Head of caudate nucleus (tissue), 42 donors: ENCODE measurements at regions of chr5 and their contacts with region 1.

Region 1: DNA sequence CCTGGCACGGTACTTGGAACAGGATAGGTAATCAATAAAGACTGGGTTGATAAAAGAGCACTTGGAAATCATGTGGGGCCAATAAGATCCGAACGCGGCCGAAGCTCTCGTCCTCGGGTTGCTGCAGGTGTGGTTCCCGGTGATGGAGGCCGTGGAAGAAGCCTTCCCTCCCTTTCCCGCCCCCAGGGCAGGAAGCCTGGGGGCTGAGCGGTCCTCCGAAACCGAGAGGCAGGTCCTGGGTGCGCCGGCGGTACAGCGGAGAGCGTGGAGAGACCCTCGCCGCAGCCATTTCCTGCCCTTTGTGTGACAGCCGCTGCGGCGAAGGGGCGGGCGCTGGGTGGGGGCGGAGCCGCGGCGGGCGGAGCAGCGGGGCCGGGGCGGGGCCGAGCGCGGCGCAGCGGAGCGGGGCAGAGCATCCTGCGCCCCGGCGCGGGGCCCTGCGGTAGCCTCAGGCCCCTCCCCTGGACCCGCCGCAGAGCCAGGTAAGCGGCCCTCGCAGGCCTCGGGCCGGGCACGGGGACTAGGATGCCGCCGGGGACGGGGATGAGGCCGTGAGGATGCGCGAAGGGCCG is at the start of gene CYFIP2:
- DNase-seq: peak in 40 of 42 donors; percentile 53 to 89 (median 76)

Region 2: DNA sequence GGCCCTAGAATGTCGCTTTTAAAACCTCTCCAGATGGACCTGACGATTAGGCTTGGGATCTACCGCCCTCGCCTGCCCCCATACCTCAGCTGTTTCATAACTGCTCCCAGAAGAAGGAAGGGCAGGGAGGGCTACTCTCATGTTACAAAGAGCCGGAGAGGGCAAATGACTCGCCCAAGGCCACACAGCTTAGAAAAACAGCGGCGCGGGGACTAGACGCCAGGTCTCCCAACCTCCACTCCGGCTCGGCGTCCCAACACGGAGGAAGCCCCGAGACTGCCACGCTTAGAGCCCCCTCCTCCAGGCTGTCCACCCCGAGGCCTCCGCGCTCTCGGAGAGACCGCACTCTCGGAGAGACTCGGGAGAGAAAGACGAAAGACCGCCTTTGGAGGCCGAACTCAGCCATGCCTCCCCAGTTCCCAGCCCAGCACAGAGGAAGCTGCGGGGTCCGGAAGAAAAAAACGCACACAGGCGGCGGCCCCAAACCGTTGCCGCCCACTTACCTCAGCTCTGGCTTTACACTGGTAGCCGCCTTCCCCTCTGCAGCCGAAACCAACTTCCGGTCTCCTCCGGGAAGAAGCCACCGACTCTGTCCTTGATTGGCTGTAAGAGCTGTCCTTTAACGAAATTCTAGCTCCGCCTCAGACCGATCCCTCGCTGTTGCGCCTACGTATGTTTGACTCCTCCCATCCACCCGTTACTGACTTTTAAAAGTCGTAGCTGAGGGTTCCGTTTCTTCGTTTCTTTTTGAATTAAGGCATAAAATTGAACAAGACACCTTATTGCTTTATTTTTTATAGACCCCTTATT is 123.3 kb before region 1 on chr5 and contains the start of gene MED7:
- intact Hi-C with region 1: loop called (anchors 10 kb)
- DNase-seq: peak; percentile 84 to 99 (median 95)

Region 3: DNA sequence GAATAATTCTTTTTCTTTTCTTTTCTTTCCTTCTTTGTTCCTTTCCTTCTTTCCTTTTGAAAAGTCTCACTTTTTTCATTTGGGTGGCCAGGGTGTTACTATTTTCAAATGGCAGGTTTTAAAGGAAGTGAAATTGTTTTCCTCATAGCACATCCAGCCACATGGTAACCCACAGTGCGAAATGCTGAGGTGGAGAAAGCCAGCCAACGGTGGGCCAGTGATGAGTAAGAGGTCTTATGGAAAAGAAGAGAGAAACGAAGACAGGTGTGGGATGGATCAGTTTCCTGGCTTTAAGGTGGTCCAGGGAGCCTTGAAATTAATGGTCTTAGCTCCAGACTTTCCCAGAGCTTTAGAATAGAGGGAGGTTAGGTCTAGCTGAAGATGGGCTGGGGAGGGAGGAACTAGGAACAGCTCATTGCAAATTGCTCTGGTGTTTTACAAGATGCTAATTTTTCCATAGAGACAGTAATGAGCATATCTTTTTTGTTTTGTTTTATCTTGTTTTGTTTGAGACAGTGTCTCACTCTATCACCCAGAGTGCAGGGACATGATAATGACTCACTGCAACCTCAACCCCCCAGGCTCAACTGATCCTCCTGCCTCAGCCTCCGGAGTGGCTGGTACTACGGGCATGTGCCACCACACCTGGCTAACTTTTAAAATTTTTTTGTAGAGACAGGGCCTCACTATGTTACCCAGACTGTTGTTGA is 67.4 kb before region 1 on chr5:
- intact Hi-C with region 1: no loop called
- DNase-seq: peak in 1 of 42 donors; percentile 29

Region 4: DNA sequence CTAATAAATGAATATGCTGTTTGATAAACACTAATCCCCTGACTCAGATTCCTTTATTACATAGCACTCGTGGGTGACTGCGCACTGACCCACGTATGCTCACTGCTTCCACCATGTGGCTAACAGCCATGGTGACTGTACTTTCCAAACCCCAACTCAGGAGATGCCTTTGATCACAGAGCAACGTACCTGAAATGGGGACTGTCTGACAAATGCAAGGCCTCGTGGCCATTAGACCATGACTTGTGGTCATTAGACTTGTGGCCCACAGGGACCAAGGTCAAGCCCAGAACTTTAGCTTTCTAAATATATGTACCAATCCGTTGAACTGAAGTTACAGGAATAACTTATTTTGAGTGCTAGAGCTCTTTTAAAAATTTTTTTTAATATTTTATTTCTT is 46.7 kb after region 1 on chr5:
- intact Hi-C with region 1: loop called (anchors 5 kb)
- DNase-seq: peak in 39 of 42 donors; percentile 21 to 80 (median 55)